ENCODE measurements at regions of chr1 and their contacts with region 1.

Region 1: GRCh38 chr1:56758135-56758534 is 61.1 kb downstream of the FYB2 start:
- DNase-seq: peak; percentile 39
- ATAC-seq: peak; percentile 76

Region 2: GRCh38 chr1:56816909-56817308 is 58.8 kb after region 1 on chr1:
- intact Hi-C with region 1: loop called (anchors 5 kb)
- DNase-seq: no peak
- ATAC-seq: no peak